Activated naive CD8-positive, alpha-beta T cell treated with anti-CD3 and anti-CD28 coated beads, Interleukin-2, amount 10 ng/mL, durations not matched to agents 7 days and 5 days (primary cell): ENCODE measurements at regions of chr6 and their contacts with region 1.

Region 1: DNA sequence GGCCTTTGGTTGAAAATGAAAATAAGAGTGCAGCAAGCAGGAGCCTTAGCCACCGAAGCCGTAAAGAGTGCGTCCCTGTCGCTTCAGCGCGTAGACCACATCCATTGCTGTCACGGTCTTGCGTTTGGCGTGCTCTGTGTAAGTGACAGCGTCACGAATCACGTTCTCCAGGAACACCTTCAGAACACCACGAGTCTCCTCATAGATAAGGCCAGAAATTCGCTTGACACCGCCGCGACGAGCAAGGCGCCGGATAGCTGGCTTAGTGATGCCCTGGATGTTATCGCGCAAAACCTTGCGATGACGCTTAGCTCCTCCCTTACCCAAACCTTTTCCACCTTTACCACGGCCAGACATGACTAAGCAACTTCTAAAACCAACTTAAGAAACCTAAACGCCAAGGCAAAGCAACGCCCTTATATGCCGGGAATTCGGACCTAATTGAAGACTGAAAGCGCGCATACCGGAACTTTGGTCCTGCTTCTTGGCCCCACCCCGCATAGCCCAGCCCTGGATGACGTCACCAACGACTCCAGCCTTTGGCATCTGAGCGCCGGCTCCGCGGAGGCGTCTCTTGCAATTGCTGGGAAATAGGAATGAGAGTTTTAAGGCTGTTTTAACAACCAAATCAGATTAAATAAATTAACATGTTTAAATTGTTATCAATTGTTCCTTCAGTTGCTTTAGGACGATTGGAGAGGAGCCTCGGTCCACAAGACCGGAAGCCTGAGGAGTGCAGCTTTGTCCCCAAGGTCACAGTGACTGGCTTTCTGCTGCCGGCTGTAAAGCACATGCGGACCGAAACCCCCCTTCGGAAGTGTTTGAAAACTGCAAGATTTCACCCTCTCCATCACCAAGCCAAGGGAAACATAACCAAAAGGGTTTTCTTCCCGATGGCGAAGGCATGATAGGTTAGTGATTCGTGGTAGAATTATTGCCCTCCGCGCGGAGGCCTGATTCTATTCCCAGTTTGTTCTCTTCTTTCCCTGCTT is 79.6 kb upstream of the BTN3A2 start:
- DNase-seq: peak; percentile 87
- ATAC-seq: peak; percentile 79
- H3K4me3 Mint-ChIP-seq: peak overlapping the region; percentile 72
- H3K27ac Mint-ChIP-seq: peak overlapping the region; percentile 92
- H3K4me1 Mint-ChIP-seq: peaks cover 37% of the 10 kb centered on the region
- H3K27me3 Mint-ChIP-seq: peaks cover 3% of the 10 kb centered on the region

Region 2: DNA sequence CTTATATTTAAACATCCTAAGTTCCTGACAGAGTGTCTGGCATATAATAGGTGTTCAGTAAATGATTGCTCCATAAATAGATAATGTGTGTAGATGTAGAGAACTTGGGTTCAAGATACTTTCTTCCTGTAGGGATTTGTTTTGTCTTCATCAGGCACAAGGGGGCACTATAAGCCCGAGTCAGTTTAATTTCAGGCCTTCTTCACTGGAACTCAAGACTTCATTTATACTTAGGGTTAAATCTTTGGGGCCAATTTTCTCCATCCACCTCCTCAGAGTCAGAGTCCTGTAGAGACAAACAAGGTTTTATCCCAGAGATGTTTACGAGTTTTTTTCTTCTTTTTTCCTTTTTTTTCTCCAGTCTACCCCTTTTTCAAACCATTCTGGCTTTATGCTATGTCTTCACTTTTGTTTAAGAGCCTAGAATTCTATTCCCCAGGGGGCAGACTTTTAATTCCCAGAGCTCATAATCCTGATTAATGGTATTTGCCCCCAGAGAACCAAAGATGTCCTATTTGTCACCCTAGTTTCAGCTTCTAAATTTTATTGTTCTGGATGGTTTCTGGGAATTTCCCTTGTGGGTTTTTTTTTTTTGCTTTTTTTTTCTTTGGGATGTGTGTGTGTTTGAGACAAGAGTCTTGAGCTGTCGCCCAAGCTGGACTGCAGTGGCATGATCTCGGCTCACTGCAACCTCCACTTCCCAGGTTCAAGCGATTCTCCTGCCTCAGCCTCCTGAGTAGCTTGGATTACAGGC is 109.8 kb before region 1 on chr6:
- POLR2A ChIA-PET with region 1: interaction called, 25 read pairs
- DNase-seq: no peak
- ATAC-seq: no peak
- H3K4me3 Mint-ChIP-seq: peak overlapping the region; percentile 54
- H3K27ac Mint-ChIP-seq: peak overlapping the region; percentile 76
- H3K4me1 Mint-ChIP-seq: peaks cover 41% of the 10 kb centered on the region
- H3K27me3 Mint-ChIP-seq: no peaks in the 10 kb centered on the region

Region 3: DNA sequence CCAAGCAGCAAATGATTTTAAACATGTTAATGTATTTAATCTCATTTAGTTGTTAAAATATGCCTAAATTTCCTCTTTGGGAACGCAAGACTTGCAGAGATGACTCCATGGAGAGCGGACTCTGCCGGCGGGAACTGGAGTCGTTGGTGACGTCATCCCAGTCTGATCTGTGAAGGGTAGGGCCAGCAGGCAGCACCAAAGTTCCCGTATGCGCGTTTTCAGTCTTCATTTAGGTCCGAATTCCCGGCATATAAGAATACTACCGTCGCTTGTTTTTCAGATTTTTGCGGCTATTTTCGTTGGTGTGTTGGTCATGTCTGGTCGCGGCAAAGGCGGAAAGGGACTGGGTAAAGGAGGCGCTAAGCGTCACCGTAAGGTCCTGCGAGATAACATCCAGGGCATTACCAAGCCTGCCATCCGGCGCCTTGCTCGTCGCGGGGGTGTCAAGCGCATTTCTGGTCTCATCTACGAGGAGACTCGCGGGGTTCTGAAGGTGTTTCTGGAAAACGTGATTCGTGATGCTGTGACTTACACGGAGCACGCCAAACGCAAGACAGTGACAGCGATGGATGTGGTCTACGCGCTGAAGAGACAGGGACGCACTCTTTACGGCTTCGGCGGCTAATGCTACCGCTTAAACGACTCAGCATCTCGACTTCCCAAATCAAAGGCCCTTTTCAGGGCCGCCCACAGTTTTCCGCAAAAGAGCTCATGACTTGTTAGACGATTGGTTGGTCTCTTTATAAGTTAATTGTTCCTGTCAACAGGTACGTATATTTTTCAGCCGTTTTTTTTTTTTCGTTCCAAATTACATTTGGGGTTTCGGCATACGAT is 80.9 kb before region 1 on chr6:
- POLR2A ChIA-PET with region 1: interaction called, 67 read pairs
- DNase-seq: peak; percentile 84
- ATAC-seq: peak; percentile 64
- H3K4me3 Mint-ChIP-seq: no peak overlapping the region
- H3K27ac Mint-ChIP-seq: no peak overlapping the region
- H3K4me1 Mint-ChIP-seq: peaks cover 34% of the 10 kb centered on the region
- H3K27me3 Mint-ChIP-seq: no peaks in the 10 kb centered on the region

Region 4: GRCh38 chr6:26304797-26305640 is 19.6 kb after region 1 on chr6:
- POLR2A ChIA-PET with region 1: interaction called, 28 read pairs
- DNase-seq: peak; percentile 59
- ATAC-seq: peak; percentile 87
- H3K4me3 Mint-ChIP-seq: peak overlapping the region; percentile 88
- H3K27ac Mint-ChIP-seq: peak overlapping the region; percentile 97
- H3K4me1 Mint-ChIP-seq: peaks cover 43% of the 10 kb centered on the region
- H3K27me3 Mint-ChIP-seq: no peaks in the 10 kb centered on the region

Region 5: DNA sequence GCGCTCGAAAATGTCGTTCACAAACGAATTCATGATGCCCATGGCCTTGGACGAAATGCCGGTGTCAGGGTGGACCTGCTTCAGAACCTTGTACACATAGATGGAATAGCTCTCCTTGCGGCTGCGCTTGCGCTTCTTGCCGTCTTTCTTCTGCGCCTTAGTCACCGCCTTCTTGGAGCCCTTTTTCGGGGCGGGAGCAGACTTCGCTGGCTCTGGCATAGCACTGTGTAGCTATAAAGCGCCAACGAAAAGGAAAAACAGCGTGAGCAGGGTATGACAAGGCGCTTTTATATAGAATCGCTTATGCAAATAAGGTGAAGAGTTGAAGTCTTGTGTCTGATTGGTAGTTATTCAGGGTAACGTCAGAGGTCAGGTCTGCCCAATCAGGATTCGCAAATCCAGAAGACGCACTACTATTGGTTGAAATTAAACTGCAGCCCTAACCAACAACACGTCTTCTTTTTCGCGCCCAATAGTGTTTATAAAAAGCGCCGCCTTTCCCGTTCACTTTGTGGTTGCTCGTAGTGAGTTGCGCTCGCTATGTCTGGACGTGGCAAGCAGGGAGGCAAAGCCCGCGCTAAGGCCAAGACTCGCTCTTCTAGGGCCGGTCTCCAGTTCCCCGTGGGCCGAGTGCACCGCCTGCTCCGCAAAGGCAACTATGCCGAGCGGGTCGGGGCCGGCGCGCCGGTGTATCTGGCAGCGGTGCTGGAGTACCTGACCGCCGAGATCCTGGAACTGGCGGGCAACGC is 847.3 kb after region 1 on chr6:
- POLR2A ChIA-PET with region 1: interaction called, 34 read pairs
- DNase-seq: peak; percentile 90
- ATAC-seq: peak; percentile 76
- H3K4me3 Mint-ChIP-seq: no peak overlapping the region
- H3K27ac Mint-ChIP-seq: no peak overlapping the region
- H3K4me1 Mint-ChIP-seq: peaks cover 46% of the 10 kb centered on the region
- H3K27me3 Mint-ChIP-seq: no peaks in the 10 kb centered on the region